PC-3 (cell line): ENCODE measurements at regions of chr1 and their contacts with region 1.

Region 1: GRCh38 chr1:32716312-32717148 is 14.0 kb upstream of the SYNC start:
- DNase-seq: peak; percentile 98
- ATAC-seq: peak; percentile 93
- H3K4me3 ChIP-seq: peak overlapping the region; percentile 31; the same call in 1 of the 2 replicates
- H3K27ac ChIP-seq: peak overlapping the region; percentile 58
- H3K4me1 ChIP-seq: peaks cover 25% of the 10 kb centered on the region
- H3K27me3 ChIP-seq: no peaks in the 10 kb centered on the region
- CTCF ChIP-seq: no peak

Region 2: GRCh38 chr1:32773018-32773763 is 56.7 kb after region 1 on chr1:
- CTCF ChIA-PET with region 1: interaction called, 43 read pairs
- POLR2A ChIA-PET with region 1: interaction called, 11 read pairs
- intact Hi-C with region 1: loop called (anchors 1 kb)
- DNase-seq: peak; percentile 87
- ATAC-seq: peak; percentile 75
- H3K4me3 ChIP-seq: no peak overlapping the region
- H3K27ac ChIP-seq: no peak overlapping the region
- H3K4me1 ChIP-seq: peaks cover 24% of the 10 kb centered on the region
- H3K27me3 ChIP-seq: no peaks in the 10 kb centered on the region
- CTCF ChIP-seq: peak; percentile 97

Region 3: DNA sequence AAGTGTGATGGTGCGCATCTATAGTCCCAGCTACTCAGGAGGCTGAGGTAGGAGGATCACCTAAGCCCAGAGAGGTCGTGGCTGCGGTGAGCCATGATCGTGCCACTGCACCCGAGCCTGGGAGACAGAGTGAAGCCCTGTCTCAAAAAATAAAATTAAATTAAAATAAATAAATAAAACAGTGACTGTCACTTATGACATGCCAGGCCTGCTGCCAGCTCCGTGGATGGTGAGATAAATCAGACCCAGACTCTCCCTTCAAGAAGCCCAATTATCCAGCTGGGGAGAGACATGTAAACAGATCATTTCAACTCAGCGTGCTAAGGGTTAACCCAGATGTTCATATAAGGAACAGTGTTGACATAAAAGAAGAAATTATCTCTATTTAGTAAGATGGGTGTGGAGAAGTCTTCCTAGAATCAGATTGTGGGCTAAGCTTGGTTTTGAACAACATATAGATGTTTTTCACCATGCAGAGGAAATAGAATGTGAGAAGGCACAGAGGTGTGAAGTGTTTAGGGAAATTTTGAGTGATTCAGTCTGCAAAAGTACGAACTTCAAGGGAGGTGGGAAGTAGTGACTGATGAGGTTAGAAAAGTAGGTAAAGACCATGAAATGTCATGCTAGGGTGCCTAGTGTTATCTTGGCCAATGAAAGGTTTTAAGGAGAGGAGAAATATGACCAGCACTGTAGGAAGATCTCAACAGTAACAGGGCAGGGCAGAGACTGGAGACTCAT is 82.3 kb after region 1 on chr1:
- CTCF ChIA-PET with region 1: no interaction called
- POLR2A ChIA-PET with region 1: no interaction called
- intact Hi-C with region 1: no loop called
- DNase-seq: peak; percentile 35
- ATAC-seq: peak; percentile 3; the same call in 1 of the 2 replicates
- H3K4me3 ChIP-seq: peak overlapping the region; percentile 45
- H3K27ac ChIP-seq: peak overlapping the region; percentile 93
- H3K4me1 ChIP-seq: peaks cover 68% of the 10 kb centered on the region
- H3K27me3 ChIP-seq: no peaks in the 10 kb centered on the region
- CTCF ChIP-seq: no peak

Region 4: GRCh38 chr1:32870615-32871363 is 154.3 kb after region 1 on chr1 and contains the start of gene FNDC5:
- CTCF ChIA-PET with region 1: no interaction called
- POLR2A ChIA-PET with region 1: no interaction called
- intact Hi-C with region 1: loop called (anchors 1 kb)
- DNase-seq: no peak
- ATAC-seq: peak; percentile 48
- H3K4me3 ChIP-seq: peak within 1 kb of the TSS; percentile 47; the same call in 1 of the 2 replicates
- H3K27ac ChIP-seq: no peak within 1 kb of the TSS
- H3K4me1 ChIP-seq: 0 out of 2 replicates have a peak, but pooled peaks cover 4% of the 10 kb centered on the region
- H3K27me3 ChIP-seq: peaks cover 10% of the 10 kb centered on the region; the same call in 1 of the 2 replicates
- CTCF ChIP-seq: no peak
- total RNA-seq, gene FNDC5: 0.22 and 0.35 TPM in 2 replicates